HepG2 (cell line): ENCODE measurements at regions of chr14 and their contacts with region 1.

Region 1: DNA sequence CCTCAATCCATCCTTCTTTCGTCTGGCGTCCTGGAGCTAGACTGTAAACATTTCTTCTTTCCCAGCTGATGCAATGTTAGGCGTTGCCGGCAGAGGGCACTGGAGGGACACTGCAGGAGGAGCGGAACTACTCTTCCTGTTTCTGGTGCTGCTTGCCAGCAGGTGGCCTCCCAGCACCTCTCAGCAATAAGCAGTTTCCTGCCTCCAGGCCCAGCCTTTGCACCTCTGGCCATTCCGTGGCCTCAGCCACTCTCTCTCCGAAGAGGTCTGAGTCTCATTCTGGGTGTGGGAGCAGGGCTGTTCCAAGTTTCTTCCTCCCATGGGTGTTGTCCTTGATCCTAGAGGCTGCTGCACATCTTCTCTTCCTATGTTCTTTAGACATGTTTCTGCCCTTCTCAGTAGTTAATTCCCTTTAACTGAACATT is 7.5 kb upstream of the ASPG start:
- DNase-seq: peak; percentile 86
- ATAC-seq: peak; percentile 97
- H3K4me3 ChIP-seq: no peak overlapping the region
- H3K27ac ChIP-seq: no peak overlapping the region
- H3K4me1 ChIP-seq: no peaks in the 10 kb centered on the region
- H3K27me3 ChIP-seq: peaks cover 0 to 31% of the 10 kb centered on the region in 2 experiments; a peak in 3 of 5 replicates
- CTCF ChIP-seq: peak; percentile 99
- EP300 ChIP-seq: no peak
- POLR2A ChIP-seq: no peak
- RAD21 ChIP-seq: peak; percentile 92

Region 2: DNA sequence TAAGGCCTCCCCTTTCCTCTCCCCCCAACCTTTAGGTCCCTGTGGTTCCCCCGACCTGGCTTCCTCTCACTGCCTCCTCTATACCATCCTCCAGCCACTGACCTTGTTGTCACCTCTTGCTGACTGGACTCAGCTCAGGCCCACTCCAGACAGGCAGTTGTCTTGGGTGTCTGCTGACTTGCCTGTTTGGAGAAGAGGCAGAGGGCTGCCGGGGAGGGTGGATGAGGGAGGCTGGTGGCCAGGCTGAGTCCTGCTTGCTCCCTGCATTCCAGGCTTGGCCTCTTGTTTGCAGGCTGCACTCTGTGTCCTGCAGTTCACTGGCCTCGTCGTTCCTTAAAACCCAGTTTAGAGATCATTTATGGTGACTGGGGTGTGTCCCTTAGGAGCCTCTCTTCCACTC is 104.7 kb before region 1 on chr14:
- CTCF ChIA-PET with region 1: no interaction called
- POLR2A ChIA-PET with region 1: no interaction called
- in situ Hi-C with region 1: no loop called
- intact Hi-C with region 1: no loop called
- DNase-seq: no peak
- ATAC-seq: peak; percentile 60
- H3K4me3 ChIP-seq: no peak overlapping the region
- H3K27ac ChIP-seq: no peak overlapping the region
- H3K4me1 ChIP-seq: 0 out of 2 replicates have a peak, but pooled peaks cover 8% of the 10 kb centered on the region
- H3K27me3 ChIP-seq: peaks cover 3% of the 10 kb centered on the region in 2 experiments; a peak in 2 of 5 replicates
- CTCF ChIP-seq: no peak
- EP300 ChIP-seq: no peak
- POLR2A ChIP-seq: no peak
- RAD21 ChIP-seq: no peak

Region 3: GRCh38 chr14:104130974-104131651 is 53.1 kb after region 1 on chr14:
- CTCF ChIA-PET with region 1: interaction called, 37 read pairs
- POLR2A ChIA-PET with region 1: no interaction called
- in situ Hi-C with region 1: no loop called
- intact Hi-C with region 1: loop called (anchors 1 kb)
- DNase-seq: peak; percentile 23
- ATAC-seq: peak; percentile 59
- H3K4me3 ChIP-seq: no peak overlapping the region
- H3K27ac ChIP-seq: no peak overlapping the region
- H3K4me1 ChIP-seq: no peaks in the 10 kb centered on the region
- H3K27me3 ChIP-seq: peaks cover 0 to 15% of the 10 kb centered on the region in 2 experiments; a peak in 4 of 5 replicates
- CTCF ChIP-seq: peak; percentile 84
- EP300 ChIP-seq: no peak
- POLR2A ChIP-seq: no peak
- RAD21 ChIP-seq: peak; percentile 24; the same call in 1 of the 2 replicates

Region 4: DNA sequence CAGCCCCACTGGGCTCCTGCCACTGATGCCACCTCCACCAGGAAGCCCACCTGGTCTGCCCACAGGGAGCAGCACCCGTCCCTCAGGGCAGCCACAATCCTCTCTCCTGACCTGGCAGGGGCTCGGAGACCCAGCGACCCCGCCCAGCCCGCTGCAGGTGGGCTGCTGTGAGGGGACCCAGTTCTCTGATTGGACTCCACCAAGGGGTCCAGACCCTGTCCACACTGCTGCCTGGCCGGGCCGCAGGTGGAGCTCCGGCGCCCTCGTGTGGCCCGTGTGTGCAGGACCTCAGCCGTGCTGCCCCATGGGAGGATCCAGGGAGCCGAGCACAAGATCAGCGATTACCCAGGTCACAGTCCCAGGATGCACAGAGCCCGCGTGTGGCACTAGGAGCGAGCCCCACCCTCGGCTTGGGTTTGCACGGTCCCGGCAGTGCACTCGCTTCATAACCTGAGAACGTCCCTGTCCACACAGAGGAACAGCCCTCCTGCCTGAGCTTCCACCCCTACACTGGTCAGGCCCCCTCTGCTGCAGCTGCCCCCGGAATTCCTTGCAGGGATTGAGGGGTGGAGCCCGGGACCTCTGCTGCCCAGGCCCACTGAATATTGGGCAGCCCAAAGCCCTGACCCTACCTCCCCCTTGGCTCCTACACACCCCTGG is 562.0 kb after region 1 on chr14:
- CTCF ChIA-PET with region 1: interaction called, 11 read pairs
- POLR2A ChIA-PET with region 1: no interaction called
- in situ Hi-C with region 1: no loop called
- intact Hi-C with region 1: no loop called
- DNase-seq: peak; percentile 32
- ATAC-seq: peak; percentile 95
- H3K4me3 ChIP-seq: no peak overlapping the region
- H3K27ac ChIP-seq: no peak overlapping the region
- H3K4me1 ChIP-seq: peaks cover 27% of the 10 kb centered on the region; the same call in 1 of the 2 replicates
- H3K27me3 ChIP-seq: peaks cover 13 to 76% of the 10 kb centered on the region in 2 experiments
- CTCF ChIP-seq: peak; percentile 97
- EP300 ChIP-seq: no peak
- POLR2A ChIP-seq: no peak
- RAD21 ChIP-seq: peak; percentile 95